Heart right ventricle (tissue), 16 donors: ENCODE measurements at regions of chr11 and their contacts with region 1.

Region 1: DNA sequence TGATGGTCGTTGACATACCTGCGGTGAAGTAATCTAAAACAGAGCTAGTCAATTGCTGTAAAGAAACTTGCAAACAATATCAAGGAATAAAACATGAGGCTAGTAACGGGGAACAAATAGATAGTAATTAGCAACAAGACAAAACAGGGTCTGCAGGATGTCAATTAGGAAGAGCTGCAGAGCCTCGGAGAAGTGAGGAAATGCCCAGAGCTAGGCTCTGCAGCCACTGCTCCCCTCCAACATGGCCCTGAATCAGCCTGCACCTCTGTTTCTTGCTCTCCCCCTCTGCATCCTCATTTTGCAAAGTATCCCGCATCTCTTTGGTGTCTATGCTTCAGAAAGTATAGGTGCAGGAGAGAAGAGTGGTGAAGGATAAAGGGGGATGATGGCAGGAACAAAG is 507.4 kb upstream of the FAT3 start:
- DNase-seq: no peak
- ATAC-seq: no peak
- H3K4me3 ChIP-seq: no peak overlapping the region
- H3K27ac ChIP-seq: no peak overlapping the region
- H3K4me1 ChIP-seq: no peaks in the 10 kb centered on the region
- H3K27me3 ChIP-seq: no peaks in the 10 kb centered on the region
- CTCF ChIP-seq: no peak

Region 2: DNA sequence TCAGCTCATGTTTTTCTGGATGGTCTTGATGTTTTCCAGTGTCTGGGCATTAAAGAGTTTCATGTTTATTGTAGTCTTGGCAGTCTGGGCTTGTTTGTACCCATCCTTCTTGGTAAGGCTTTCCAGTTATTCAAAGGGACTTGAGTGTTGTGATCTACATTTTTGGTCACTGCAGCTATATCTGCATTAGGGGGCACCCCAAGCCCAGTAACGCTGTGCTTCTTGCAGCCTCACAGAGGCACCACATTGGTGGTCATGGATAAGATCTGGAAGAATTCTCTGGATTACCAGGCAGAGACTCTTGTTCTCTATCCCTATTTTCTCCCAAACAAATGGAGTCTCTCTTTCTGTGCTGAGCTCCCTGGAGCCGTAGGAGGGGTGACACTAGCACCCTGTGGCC is 55.9 kb after region 1 on chr11:
- intact Hi-C with region 1: loop called in 1 of 10 experiments (anchors 10 kb)
- DNase-seq: no peak
- ATAC-seq: no peak
- H3K4me3 ChIP-seq: no peak overlapping the region
- H3K27ac ChIP-seq: no peak overlapping the region
- H3K4me1 ChIP-seq: peaks cover 0 to 7% (median 0%) of the 10 kb centered on the region in 9 donors
- H3K27me3 ChIP-seq: no peaks in the 10 kb centered on the region
- CTCF ChIP-seq: no peak